ENCODE measurements at regions of chr3 and their contacts with region 1.

Region 1: GRCh38 chr3:62665598-62666437 is 209.4 kb downstream of the CADPS start:
- ATAC-seq: peak; percentile 89 to 96 (median 93)
- H3K4me3 ChIP-seq: no peak overlapping the region
- H3K27ac ChIP-seq: no peak overlapping the region
- H3K4me1 ChIP-seq: peaks cover 13 to 14% of the 10 kb centered on the region in 2 donors

Region 2: DNA sequence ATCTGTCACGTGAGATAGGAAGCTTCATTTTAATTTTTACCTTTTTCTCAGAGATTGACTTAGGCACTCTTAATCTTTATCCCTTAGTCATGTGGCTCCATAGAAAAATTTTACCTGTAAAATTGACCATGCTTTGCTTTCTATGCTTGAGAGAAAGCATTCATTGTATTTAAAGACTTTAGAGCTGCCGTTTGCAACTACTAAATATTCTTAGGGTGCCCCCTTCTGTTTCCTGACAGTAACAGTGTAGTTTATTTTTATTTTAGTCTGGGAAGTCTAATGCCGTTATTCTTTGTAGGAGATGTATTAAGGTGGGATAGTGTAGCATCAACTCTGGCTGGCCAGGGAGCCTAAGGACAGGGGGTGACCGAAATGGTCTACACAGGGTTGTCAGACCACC is 527.8 kb after region 1 on chr3:
- in situ Hi-C with region 1: loop called in 4 of 9 experiments (anchors 25 kb)
- ATAC-seq: peak; percentile 45 to 72 (median 58)
- H3K4me3 ChIP-seq: no peak overlapping the region
- H3K27ac ChIP-seq: no peak overlapping the region
- H3K4me1 ChIP-seq: peaks cover 3 to 19% of the 10 kb centered on the region in 2 donors

Region 3: GRCh38 chr3:63207066-63207640 is 541.3 kb after region 1 on chr3:
- in situ Hi-C with region 1: loop called in 2 of 9 experiments (anchors 25 kb)
- ATAC-seq: no peak
- H3K4me3 ChIP-seq: no peak overlapping the region
- H3K27ac ChIP-seq: no peak overlapping the region
- H3K4me1 ChIP-seq: no peaks in the 10 kb centered on the region

Region 4: GRCh38 chr3:63228087-63229023 is 562.5 kb after region 1 on chr3:
- in situ Hi-C with region 1: loop called in 5 of 9 experiments (anchors 25 kb)
- ATAC-seq: peak in 4 of 8 experiments; percentile 54 to 92 (median 80)
- H3K4me3 ChIP-seq: no peak overlapping the region
- H3K27ac ChIP-seq: no peak overlapping the region
- H3K4me1 ChIP-seq: peaks cover 0 to 9% of the 10 kb centered on the region in 2 donors

Measured in motor neuron (in vitro differentiated cells).